ENCODE measurements at regions of chr18 and their contacts with region 1.

Region 1: DNA sequence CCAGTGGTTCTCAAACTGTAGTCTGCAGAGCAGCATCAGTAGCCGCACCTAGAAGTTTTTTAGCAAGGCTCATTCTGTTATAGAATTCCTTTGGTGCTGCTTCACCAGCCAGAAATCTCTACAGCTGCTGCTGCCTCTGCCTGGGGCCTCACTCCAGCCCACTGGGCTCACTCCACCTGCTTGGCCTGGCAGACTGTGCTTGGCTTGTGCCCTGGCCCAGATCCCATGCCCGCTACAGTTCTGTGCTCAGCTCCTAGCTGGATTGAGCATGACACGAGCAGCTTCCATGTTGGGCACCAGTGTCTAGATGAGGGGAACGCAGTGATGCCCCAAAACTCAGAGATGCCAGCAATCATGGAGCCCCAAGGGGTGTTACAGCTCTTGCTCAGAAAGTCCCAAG is 22.6 kb downstream of the MAPK4 start:
- DNase-seq: no peak
- H3K4me3 ChIP-seq: no peak overlapping the region
- CTCF ChIP-seq: no peak

Region 2: GRCh38 chr18:50492097-50492496 is 90.4 kb before region 1 on chr18:
- in situ Hi-C with region 1: no loop called
- DNase-seq: no peak
- H3K4me3 ChIP-seq: no peak overlapping the region
- CTCF ChIP-seq: no peak

Region 3: DNA sequence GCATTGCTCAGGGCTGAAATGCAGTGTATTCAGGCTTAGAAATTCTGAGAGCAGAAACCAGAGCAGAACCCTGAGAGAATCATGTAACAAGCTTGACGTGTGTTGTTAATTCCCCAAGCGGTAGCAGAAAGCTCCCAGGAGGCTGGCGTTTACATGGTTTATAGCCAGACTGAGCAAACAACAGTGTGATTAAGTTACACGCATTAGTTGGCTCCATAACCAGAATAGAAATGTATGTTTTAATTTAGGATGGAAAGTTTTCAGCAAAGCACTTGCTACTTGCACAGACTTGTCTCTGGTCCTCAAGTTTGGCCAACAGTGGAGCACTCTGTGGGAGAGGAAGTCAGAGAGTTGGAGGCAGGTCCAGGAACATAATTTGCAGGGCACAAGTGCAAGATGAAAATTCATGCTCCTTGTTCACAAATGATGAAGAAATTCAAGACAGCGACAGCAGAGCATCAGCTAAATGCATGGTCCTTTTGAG is 46.7 kb after region 1 on chr18:
- in situ Hi-C with region 1: loop called (anchors 5 kb)
- DNase-seq: no peak
- H3K4me3 ChIP-seq: no peak overlapping the region
- CTCF ChIP-seq: no peak

Region 4: GRCh38 chr18:50662177-50662576 is 79.7 kb after region 1 on chr18:
- in situ Hi-C with region 1: loop called (anchors 5 kb)
- DNase-seq: no peak
- H3K4me3 ChIP-seq: no peak overlapping the region
- CTCF ChIP-seq: peak; percentile 30

Region 5: DNA sequence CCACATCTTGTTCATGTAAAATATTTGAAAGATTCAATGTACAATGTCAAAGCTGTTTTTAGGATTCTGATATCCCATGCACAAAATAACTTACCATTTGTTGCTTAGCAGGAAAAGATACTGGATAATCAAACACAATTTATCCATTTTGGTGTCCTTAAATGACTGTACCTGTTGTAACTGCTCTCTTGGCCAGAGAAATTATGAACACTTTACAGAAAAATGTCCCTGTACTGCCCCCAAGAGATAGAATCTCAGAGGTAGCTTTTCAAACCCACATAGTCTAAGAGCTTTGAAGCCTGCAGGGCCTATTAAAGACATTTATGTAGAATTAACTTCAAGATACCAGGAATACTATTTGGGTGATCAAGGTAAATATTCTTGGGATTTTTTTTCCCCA is 284.3 kb after region 1 on chr18:
- in situ Hi-C with region 1: no loop called
- DNase-seq: no peak
- H3K4me3 ChIP-seq: no peak overlapping the region
- CTCF ChIP-seq: peak; percentile 27

Measured in astrocyte of the cerebellum (primary cell).